Dorsolateral prefrontal cortex (tissue), 120 donors: ENCODE measurements at regions of chr15 and their contacts with region 1.

Region 1: GRCh38 chr15:100873029-100873677 is 6.5 kb upstream of the ALDH1A3 start:
- DNase-seq: peak in 6 of 10 donors; percentile 50 to 84 (median 56)
- H3K4me3 ChIP-seq: no peak overlapping the region
- H3K27ac ChIP-seq: no peak overlapping the region
- H3K27me3 ChIP-seq: peaks cover 0 to 12% (median 2%) of the 10 kb centered on the region in 45 donors
- CTCF ChIP-seq: peak; percentile 84 to 98 (median 93)

Region 2: DNA sequence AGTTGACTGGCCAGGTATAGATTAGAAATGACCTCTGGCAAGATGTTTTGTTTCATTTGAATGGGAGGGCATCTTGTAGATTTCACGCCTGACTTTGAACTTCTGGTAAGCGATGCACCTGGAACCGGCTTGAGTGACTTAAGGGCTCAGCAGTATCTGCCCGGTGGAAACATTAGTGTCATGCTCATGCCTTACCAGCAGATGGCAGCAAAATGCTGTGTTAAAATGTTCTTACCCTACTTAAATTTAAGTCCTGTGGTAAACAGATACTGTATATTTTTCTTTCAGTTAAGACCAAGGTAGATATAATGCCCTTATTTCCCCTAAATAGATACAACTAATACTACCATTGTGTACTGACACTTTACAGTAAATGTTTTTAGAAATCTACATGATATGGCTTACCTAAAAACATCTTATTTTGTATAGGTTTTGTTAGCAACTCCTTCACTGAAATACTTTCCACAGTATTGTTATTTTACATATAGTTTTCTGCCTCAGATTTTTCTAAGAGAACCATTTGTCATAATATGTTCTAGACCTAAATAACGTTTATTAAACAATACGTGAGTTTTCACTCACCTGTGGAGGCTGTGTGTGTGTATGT is 245.3 kb before region 1 on chr15:
- intact Hi-C with region 1: loop called (anchors 5 to 10 kb)
- DNase-seq: peak in 9 of 10 donors; percentile 44 to 76 (median 58)
- H3K4me3 ChIP-seq: no peak overlapping the region
- H3K27ac ChIP-seq: no peak overlapping the region
- H3K27me3 ChIP-seq: no peaks in the 10 kb centered on the region
- CTCF ChIP-seq: peak; percentile 83 to 99 (median 95)

Region 3: DNA sequence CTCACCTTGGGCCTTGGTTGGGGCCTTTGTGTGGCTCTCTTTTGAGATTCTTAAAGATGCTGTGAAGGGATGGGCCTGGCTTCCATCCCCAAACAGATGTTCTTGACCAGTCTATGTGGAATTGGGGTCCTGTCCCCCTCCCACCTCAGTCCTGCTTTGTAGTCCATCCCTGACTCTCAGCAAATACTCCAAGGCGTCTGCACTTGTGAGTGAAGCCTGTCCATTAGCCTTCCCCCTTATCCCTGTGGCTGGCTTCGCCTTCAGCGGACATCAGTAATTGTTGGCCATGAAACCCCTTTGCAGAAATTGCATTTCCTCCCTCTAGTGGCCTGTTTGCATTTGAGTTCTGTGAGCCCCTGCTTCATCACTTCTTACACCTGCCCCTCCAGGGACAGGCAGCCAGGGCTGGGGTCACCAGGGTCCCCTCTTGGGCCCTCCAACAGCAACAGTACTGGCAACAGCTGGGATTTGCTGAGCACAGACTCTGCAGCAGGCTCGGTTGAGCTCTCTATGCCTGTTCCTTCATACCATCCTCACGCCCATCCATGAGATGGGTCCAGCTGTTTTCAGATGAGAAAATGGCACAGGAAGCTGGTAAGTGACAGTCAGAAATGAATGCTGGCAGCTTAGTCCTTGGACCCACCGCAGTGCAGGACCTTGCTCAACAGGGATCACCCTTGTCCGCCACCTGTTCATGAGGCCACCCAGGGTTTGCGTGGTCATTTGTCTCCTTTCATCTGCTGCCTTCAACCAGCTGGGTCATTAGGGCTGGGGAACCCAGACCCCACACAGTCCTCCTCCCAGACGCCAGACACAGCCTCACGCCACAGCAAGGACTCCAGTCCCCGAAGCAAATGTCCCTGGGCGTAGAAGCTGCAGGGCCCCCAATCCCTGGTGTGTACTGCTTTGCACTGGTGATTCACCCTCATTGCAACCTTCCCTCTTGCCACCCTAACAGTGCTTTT is 37.1 kb after region 1 on chr15:
- intact Hi-C with region 1: no loop called
- DNase-seq: no peak
- H3K4me3 ChIP-seq: no peak overlapping the region
- H3K27ac ChIP-seq: no peak overlapping the region
- H3K27me3 ChIP-seq: peaks cover 0 to 4% (median 0%) of the 10 kb centered on the region in 45 donors
- CTCF ChIP-seq: peak in 3 of 56 donors; percentile 15 to 20 (median 20)

Region 4: GRCh38 chr15:101217483-101217882 is 344.3 kb after region 1 on chr15:
- intact Hi-C with region 1: no loop called
- DNase-seq: no peak
- H3K4me3 ChIP-seq: no peak overlapping the region
- H3K27ac ChIP-seq: no peak overlapping the region
- H3K27me3 ChIP-seq: no peaks in the 10 kb centered on the region
- CTCF ChIP-seq: no peak

Region 5: DNA sequence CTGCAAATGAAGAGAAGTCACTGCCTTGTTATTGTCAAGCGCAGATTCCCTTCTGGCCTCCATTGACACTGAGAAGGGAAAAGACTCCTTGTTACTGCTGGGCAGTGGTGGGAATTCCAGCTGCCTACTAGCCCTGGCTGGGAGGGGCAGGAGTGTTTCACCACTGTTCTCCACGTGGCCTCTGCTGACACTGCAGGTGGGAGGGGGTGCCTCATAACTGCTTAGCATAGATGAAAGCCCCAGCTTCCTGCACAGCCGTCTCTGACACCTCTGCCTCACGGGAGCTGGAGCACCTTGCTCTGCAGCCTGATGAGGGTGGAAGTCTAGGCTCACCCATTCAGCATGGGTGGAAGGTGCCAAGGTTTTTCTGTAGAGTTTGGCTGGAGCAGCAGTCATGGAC is 726.9 kb after region 1 on chr15:
- intact Hi-C with region 1: no loop called
- DNase-seq: no peak
- H3K4me3 ChIP-seq: no peak overlapping the region
- H3K27ac ChIP-seq: no peak overlapping the region
- H3K27me3 ChIP-seq: peaks cover 0 to 12% (median 0%) of the 10 kb centered on the region in 45 donors
- CTCF ChIP-seq: no peak